ENCODE measurements at regions of chr2 and their contacts with region 1.

Region 1: DNA sequence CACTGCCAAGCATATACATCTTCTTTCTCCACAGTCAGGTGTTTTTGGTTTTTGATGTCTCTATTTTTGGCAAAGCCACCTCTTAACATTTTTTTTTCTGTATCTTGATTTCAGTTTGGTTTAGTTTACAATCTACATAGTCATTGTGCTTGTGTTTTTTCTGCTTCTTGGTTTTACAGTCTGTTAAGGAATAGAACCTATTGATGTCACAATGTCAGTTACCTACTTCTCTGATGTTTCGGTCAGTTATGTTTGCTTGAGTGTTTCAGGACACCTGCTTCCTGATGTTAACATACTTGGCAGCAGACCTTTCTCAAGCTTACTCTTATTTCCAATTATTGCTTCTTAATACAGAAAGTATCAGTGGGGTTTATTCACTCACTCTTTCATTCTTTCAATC is 253.3 kb downstream of the SPAG16 start:
- DNase-seq: no peak
- H3K4me3 ChIP-seq: no peak overlapping the region
- CTCF ChIP-seq: no peak

Region 2: GRCh38 chr2:213496226-213496625 is 41.4 kb before region 1 on chr2:
- in situ Hi-C with region 1: loop called (anchors 5 kb)
- DNase-seq: no peak
- H3K4me3 ChIP-seq: no peak overlapping the region
- CTCF ChIP-seq: no peak

Measured in astrocyte of the cerebellum (primary cell).